Endothelial cell of umbilical vein (primary cell): ENCODE measurements at regions of chr4 and their contacts with region 1.

Region 1: DNA sequence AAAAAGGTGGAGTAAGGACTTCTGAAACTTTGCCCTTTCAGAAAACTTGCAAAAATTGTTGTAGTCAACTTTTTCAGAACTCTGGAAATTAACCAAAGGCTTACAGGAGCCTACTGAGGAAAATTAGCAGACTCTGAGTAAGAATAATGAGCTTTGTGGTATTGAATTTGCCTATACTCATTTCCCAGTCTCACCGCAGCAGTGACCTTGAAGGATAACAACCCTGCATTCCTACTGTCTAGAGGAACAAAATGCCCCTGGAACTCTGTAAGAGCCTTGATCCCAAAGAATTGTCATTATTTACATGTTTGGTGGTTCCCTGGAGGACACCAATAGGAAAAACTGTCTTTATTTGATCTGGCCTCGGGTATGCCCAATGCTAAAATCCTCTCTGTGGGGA is 57.9 kb downstream of the MND1 start:
- DNase-seq: no peak
- H3K4me3 ChIP-seq: no peak overlapping the region
- H3K27ac ChIP-seq: no peak overlapping the region
- H3K4me1 ChIP-seq: no peaks in the 10 kb centered on the region
- H3K27me3 ChIP-seq: no peaks in the 10 kb centered on the region
- CTCF ChIP-seq: no peak
- POLR2A ChIP-seq: no peak

Region 2: DNA sequence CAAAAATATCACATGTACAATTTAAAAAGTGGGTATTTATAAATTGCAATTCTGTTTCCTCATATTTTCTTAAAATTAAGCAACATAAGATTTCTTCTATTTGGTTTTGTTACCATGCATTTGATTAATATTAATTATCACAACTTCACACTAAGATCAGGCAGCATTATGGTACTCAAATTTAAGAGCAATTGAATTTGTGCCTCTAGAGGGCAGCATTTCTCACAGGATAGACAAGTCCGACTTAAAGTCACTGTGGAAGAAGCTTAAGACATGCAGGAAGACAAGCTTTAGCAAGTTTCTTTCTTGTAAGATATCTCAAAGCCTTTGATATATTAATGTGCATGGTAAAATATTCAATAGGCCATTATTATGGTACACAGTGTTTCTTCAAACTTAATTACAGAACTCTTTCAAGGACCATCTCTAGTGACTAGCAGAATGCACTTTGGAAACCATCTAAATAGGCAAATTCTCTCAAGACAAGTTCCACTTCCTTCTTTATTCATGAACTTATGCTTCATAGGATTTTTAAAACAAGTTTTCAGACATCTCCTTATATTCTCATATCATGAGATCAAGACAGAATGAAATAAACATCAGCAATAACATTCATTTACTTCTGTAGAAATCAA is 901.4 kb before region 1 on chr4:
- CTCF ChIA-PET with region 1: no interaction called
- POLR2A ChIA-PET with region 1: no interaction called
- dilution Hi-C with region 1: no loop called
- intact Hi-C with region 1: no loop called
- DNase-seq: peak; percentile 84
- H3K4me3 ChIP-seq: no peak overlapping the region
- H3K27ac ChIP-seq: no peak overlapping the region
- H3K4me1 ChIP-seq: peaks cover 6% of the 10 kb centered on the region
- H3K27me3 ChIP-seq: no peaks in the 10 kb centered on the region
- CTCF ChIP-seq: peak; percentile 54 to 57
- POLR2A ChIP-seq: no peak

Region 3: DNA sequence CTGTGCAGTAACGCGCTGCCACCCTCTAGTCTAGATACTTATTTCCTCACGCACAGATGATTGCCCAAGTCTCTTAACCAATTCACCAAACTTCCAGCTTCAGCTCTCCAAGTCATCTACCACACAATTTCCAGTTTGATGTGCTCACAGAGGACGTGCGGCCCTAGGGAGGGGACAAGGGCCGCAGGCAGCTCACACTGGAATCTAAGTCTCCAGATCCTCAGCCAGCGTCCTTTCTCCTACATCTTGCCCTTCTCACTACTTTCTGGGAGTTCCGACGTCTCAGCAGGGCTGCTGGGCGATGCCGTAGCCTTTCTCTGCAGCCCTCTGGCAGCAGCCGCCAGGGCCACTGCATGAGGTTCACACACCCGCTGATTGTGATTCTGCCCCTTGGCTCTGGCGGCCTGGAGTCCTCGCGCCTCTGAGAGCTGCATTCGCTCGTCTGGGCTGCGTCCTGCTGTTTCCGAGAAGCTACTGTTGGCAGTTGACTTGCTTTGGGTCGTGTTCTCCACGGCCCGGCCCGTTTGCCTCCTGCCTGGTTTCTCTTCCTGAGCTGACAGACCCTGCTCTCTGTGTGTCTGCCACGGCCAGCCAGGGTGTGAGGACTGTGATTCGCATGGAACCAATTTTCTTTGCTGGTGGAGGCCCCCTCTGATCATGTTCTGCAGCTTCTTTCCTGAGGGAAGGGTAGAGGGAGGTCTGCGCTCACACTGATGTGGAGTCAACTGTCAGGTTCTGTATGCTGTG is 49.7 kb after region 1 on chr4:
- CTCF ChIA-PET with region 1: no interaction called
- POLR2A ChIA-PET with region 1: no interaction called
- dilution Hi-C with region 1: no loop called
- intact Hi-C with region 1: loop called (anchors 5 kb)
- DNase-seq: no peak
- H3K4me3 ChIP-seq: no peak overlapping the region
- H3K27ac ChIP-seq: no peak overlapping the region
- H3K4me1 ChIP-seq: peaks cover 9% of the 10 kb centered on the region
- H3K27me3 ChIP-seq: no peaks in the 10 kb centered on the region
- CTCF ChIP-seq: no peak
- POLR2A ChIP-seq: no peak

Region 4: DNA sequence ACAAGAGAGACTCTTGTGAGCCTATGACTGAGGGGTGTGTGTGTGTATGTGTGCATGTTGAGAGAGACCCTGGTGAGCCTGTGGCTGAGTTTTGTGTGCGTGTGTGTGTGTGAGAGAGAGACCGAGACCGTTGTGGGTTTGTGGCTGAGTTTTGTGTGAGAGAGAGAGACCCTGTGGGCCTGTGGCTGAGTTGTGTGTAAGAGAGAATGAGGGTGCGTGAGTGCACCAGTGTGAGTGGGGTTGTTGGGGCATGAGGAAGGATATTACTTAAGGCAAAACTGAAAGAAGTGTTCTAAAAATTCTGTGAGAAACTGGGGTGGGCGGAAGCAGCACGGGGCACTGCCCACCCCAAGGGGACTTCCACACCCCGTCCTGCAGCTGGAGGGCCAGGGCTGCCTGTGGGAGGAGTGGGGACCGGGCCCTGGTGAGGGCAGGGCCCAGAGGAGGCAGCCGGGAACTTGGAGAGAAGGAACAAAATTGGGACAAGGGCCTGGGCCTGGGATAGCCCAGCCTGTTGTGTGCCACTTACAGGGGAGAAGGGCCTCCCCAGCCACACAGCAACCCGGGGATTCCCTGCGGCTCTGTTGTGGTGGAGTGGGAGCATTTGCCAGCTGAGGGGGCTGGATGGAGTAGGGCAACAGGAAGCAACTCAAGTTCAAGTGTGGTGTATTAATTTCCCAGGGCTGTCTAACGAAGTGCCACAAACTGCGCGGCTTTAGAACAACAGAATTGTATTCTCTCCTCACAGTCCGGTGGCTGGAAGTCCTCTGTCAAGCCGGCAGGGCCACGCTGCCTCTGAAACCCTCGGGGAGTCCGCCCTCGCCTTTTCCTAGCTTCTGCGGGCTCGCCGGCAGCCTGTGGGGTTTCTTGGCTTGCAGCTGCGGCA is 85.9 kb after region 1 on chr4:
- CTCF ChIA-PET with region 1: no interaction called
- POLR2A ChIA-PET with region 1: no interaction called
- dilution Hi-C with region 1: no loop called
- intact Hi-C with region 1: no loop called
- DNase-seq: peak; percentile 50
- H3K4me3 ChIP-seq: no peak overlapping the region
- H3K27ac ChIP-seq: no peak overlapping the region
- H3K4me1 ChIP-seq: peaks cover 28% of the 10 kb centered on the region
- H3K27me3 ChIP-seq: no peaks in the 10 kb centered on the region
- CTCF ChIP-seq: no peak
- POLR2A ChIP-seq: no peak